ENCODE measurements at regions of chr2 and their contacts with region 1.

Region 1: GRCh38 chr2:202815548-202816360 is 55.8 kb downstream of the ICA1L start:
- DNase-seq: no peak
- ATAC-seq: no peak
- H3K4me3 ChIP-seq: no peak overlapping the region
- H3K27ac ChIP-seq: no peak overlapping the region
- H3K4me1 ChIP-seq: no peaks in the 10 kb centered on the region
- H3K27me3 ChIP-seq: no peaks in the 10 kb centered on the region
- CTCF ChIP-seq: no peak

Region 2: GRCh38 chr2:202545523-202545922 is 270.2 kb before region 1 on chr2:
- CTCF ChIA-PET with region 1: no interaction called
- POLR2A ChIA-PET with region 1: no interaction called
- in situ Hi-C with region 1: no loop called
- intact Hi-C with region 1: no loop called
- DNase-seq: no peak
- ATAC-seq: no peak
- H3K4me3 ChIP-seq: no peak overlapping the region
- H3K27ac ChIP-seq: no peak overlapping the region
- H3K4me1 ChIP-seq: no peaks in the 10 kb centered on the region; the same call in 1 of the 2 replicates
- H3K27me3 ChIP-seq: no peaks in the 10 kb centered on the region
- CTCF ChIP-seq: no peak

Region 3: GRCh38 chr2:202564226-202564625 is 251.5 kb before region 1 on chr2:
- CTCF ChIA-PET with region 1: no interaction called
- POLR2A ChIA-PET with region 1: no interaction called
- in situ Hi-C with region 1: no loop called
- intact Hi-C with region 1: no loop called
- DNase-seq: no peak
- ATAC-seq: no peak
- H3K4me3 ChIP-seq: no peak overlapping the region
- H3K27ac ChIP-seq: no peak overlapping the region
- H3K4me1 ChIP-seq: no peaks in the 10 kb centered on the region
- H3K27me3 ChIP-seq: no peaks in the 10 kb centered on the region
- CTCF ChIP-seq: no peak

Region 4: DNA sequence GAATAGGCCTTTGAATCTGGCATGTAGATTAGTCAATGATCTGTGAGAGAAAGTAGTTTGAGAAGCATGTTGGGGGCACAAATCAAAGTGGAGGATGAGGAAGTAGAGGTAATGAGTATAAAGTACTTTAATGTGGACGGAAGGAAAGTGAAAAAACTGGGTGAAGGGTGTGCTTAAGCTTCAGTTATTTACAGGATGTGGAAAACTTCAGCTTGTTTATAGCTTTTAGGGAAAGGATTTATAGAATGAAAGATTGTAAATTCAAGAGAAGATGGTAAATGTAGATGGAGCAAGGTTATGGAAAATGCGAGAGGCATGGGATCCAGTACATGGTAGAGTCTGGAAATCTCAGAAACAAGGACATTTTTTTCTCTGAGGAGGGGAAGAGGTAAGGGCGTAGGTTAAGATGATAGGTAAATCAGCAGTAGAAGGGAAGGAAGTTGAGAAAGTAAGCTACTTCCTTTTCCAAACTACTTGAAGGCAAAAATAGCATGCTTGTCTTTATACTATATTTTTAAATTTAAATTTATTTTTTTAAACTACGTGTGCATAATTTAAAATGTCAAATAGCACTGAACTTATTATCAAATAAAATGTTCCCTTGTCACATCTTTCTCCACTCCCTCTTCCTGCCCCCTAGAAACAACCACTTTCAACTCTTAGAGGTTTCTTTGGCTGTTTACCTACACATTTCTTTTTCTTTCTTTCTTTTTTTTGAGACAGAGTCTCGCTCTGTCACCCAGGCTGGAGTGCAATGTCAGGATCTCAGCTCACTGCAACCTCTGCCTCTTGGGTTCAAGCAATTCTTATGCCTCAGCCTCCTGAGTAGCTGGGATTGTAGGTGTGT is 172.5 kb before region 1 on chr2:
- CTCF ChIA-PET with region 1: no interaction called
- POLR2A ChIA-PET with region 1: no interaction called
- in situ Hi-C with region 1: no loop called
- intact Hi-C with region 1: no loop called
- DNase-seq: no peak
- ATAC-seq: no peak
- H3K4me3 ChIP-seq: no peak overlapping the region
- H3K27ac ChIP-seq: peak overlapping the region; percentile 67; the same call in 1 of the 2 replicates
- H3K4me1 ChIP-seq: peaks cover 30% of the 10 kb centered on the region
- H3K27me3 ChIP-seq: no peaks in the 10 kb centered on the region
- CTCF ChIP-seq: no peak

Region 5: GRCh38 chr2:202780514-202781021 is 35.2 kb before region 1 on chr2:
- CTCF ChIA-PET with region 1: interaction called, 14 read pairs
- POLR2A ChIA-PET with region 1: no interaction called
- in situ Hi-C with region 1: no loop called
- intact Hi-C with region 1: no loop called
- DNase-seq: peak; percentile 57
- ATAC-seq: peak; percentile 89
- H3K4me3 ChIP-seq: no peak overlapping the region
- H3K27ac ChIP-seq: no peak overlapping the region
- H3K4me1 ChIP-seq: no peaks in the 10 kb centered on the region
- H3K27me3 ChIP-seq: no peaks in the 10 kb centered on the region
- CTCF ChIP-seq: no peak